K562 (cell line): ENCODE measurements at regions of chr5 and their contacts with region 1.

Region 1: GRCh38 chr5:131394128-131394527 is 130.3 kb downstream of the CDC42SE2 start:
- DNase-seq: no peak
- ATAC-seq: no peak
- H3K4me3 ChIP-seq: no peak overlapping the region
- H3K27ac ChIP-seq: no peak overlapping the region
- H3K4me1 ChIP-seq: no peaks in the 10 kb centered on the region
- H3K27me3 ChIP-seq: no peaks in the 10 kb centered on the region
- CTCF ChIP-seq: no peak
- EP300 ChIP-seq: no peak
- POLR2A ChIP-seq: no peak
- RAD21 ChIP-seq: no peak

Region 2: GRCh38 chr5:131186561-131187256 is 207.4 kb before region 1 on chr5:
- CTCF ChIA-PET with region 1: no interaction called
- POLR2A ChIA-PET with region 1: no interaction called
- in situ Hi-C with region 1: no loop called
- intact Hi-C with region 1: no loop called
- DNase-seq: no peak
- ATAC-seq: peak; percentile 59
- H3K4me3 ChIP-seq: no peak overlapping the region
- H3K27ac ChIP-seq: no peak overlapping the region
- H3K4me1 ChIP-seq: peaks cover 0 to 10% of the 10 kb centered on the region in 2 experiments; a peak in 3 of 5 replicates
- H3K27me3 ChIP-seq: no peaks in the 10 kb centered on the region
- CTCF ChIP-seq: no peak
- EP300 ChIP-seq: no peak
- POLR2A ChIP-seq: no peak
- RAD21 ChIP-seq: no peak

Region 3: DNA sequence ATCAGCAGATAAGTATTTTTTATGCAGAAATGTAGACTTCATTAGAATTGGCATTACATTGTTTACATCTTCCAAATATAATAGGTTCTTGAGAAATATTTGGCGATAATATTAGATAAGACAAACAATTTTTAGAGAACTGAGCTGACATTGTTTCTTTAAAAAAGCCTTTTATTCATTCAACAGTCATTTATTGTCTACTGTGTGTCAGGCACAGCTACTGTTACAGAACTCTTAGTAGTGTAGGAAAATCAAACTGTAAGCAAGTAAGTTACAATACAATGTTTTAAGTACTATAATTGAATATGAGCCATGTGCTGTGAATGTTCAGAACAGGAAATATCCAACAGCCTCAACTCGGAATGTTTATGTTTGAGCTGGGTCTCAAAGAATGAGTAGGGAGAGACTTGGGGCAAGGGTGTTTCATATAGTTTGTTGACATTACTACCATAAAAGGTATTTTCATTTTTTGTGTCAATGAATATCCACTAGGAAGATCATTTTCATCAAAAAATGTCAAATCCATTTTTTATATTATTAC is 16.3 kb before region 1 on chr5:
- CTCF ChIA-PET with region 1: no interaction called
- POLR2A ChIA-PET with region 1: no interaction called
- in situ Hi-C with region 1: no loop called
- intact Hi-C with region 1: no loop called
- DNase-seq: no peak
- ATAC-seq: no peak
- H3K4me3 ChIP-seq: no peak overlapping the region
- H3K27ac ChIP-seq: peak overlapping the region; percentile 83; the same call in 2 of the 3 replicates
- H3K4me1 ChIP-seq: peaks cover 11 to 57% of the 10 kb centered on the region in 2 experiments
- H3K27me3 ChIP-seq: no peaks in the 10 kb centered on the region
- CTCF ChIP-seq: no peak
- EP300 ChIP-seq: no peak
- POLR2A ChIP-seq: no peak
- RAD21 ChIP-seq: no peak

Region 4: GRCh38 chr5:131406975-131407638 is 13.0 kb after region 1 on chr5:
- CTCF ChIA-PET with region 1: no interaction called
- POLR2A ChIA-PET with region 1: interaction called, 21 read pairs
- in situ Hi-C with region 1: no loop called
- intact Hi-C with region 1: no loop called
- DNase-seq: no peak
- ATAC-seq: no peak
- H3K4me3 ChIP-seq: no peak overlapping the region
- H3K27ac ChIP-seq: no peak overlapping the region
- H3K4me1 ChIP-seq: no peaks in the 10 kb centered on the region
- H3K27me3 ChIP-seq: no peaks in the 10 kb centered on the region
- CTCF ChIP-seq: no peak
- EP300 ChIP-seq: no peak
- POLR2A ChIP-seq: no peak
- RAD21 ChIP-seq: no peak